ENCODE measurements at regions of chr6 and their contacts with region 1.

Region 1: DNA sequence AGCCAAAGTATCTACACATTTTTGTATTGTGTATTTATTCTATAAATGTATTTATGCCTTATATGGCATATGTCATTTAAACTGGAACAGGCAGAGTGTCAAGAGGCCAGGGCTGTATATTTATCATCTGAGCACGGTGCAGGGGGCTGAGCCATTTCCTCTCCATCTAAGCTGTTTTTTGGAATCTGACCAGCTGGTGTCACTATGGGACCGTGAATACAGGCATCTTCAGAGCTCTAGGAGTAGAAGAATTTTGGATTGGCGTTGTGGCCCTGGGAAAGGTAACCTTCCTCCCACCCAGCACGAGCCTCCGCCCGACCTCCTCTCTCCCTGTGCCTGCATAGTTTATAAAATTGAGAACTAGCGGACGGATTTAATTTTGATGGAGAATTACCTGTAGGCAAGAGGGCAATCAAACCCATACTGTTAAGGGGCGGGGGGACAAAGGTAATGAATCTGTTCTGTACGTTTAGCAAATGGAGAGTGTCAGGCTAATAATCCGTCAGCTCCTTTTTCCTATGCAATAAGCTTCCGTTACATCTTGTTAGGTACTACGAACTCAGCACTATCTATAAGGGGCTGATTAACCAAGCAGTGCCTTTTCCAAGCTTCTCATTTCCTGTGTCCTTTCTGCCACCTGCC is 29.0 kb upstream of the EEF1E1 start:
- DNase-seq: peak in 1 of 2 donors; percentile 36
- ATAC-seq: peak; percentile 48 to 83 (median 69)
- H3K4me3 ChIP-seq: no peak overlapping the region
- H3K27ac ChIP-seq: no peak overlapping the region
- H3K4me1 ChIP-seq: peaks cover 0 to 4% (median 0%) of the 10 kb centered on the region in 9 donors
- H3K27me3 ChIP-seq: peaks cover 0 to 47% (median 9%) of the 10 kb centered on the region in 7 donors
- CTCF ChIP-seq: peak in 8 of 9 donors; percentile 21 to 68 (median 52)

Region 2: GRCh38 chr6:8219352-8219943 is 88.1 kb after region 1 on chr6:
- intact Hi-C with region 1: loop called (anchors 1 to 5 kb)
- DNase-seq: peak in 1 of 2 donors; percentile 21
- ATAC-seq: peak in 1 of 8 donors; percentile 61
- H3K4me3 ChIP-seq: no peak overlapping the region
- H3K27ac ChIP-seq: no peak overlapping the region
- H3K4me1 ChIP-seq: no peaks in the 10 kb centered on the region
- H3K27me3 ChIP-seq: peaks cover 0 to 17% (median 4%) of the 10 kb centered on the region in 7 donors
- CTCF ChIP-seq: peak; percentile 50 to 84 (median 74)